Pancreas (tissue), 10 donors: ENCODE measurements at regions of chr16 and their contacts with region 1.

Region 1: DNA sequence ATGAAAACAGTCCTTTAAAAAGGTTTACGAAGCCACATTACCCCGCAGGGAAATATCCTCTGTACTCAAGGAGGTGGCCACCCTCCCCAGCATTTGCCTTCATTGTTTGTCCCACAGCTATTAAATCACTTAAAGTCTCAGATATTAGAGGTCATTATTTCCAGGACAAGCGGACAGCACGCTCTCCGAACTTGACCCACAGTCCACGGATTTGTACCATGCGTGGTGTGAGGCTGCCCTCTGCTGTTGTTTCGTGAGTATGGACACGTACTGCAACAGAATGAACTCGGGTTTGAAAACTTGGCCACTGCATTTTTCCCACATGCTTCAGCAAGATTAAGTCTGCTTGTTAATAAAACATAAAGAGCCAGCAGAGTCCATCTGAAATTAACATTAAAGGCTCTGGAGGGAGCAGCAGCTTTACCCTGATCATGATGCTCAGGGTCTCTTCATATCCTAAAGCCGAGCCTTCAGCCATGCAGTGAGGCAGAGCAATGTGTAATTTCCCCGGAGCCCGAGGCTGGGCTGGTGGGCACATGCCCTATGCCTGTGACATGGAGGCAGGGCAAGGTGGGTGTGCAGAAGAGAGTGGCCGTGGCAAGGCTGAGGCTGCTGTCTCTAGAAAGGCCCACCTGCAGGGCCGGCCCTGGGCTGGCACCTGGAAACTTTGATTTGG is 19.7 kb downstream of the MEAK7 start:
- DNase-seq: peak in 1 of 6 donors; percentile 53
- ATAC-seq: peak in 3 of 4 donors; percentile 72 to 78 (median 72)
- H3K4me3 ChIP-seq: no peak overlapping the region
- H3K27ac ChIP-seq: no peak overlapping the region
- H3K4me1 ChIP-seq: no peaks in the 10 kb centered on the region
- H3K27me3 ChIP-seq: no peaks in the 10 kb centered on the region
- CTCF ChIP-seq: peak in 2 of 4 donors; percentile 14 to 45

Region 2: GRCh38 chr16:84277237-84277823 is 207.4 kb before region 1 on chr16:
- intact Hi-C with region 1: loop called in 2 of 3 experiments (anchors 5 to 10 kb)
- DNase-seq: peak in 5 of 6 donors; percentile 11 to 81 (median 40)
- ATAC-seq: peak in 3 of 4 donors; percentile 60 to 76 (median 66)
- H3K4me3 ChIP-seq: no peak overlapping the region
- H3K27ac ChIP-seq: no peak overlapping the region
- H3K4me1 ChIP-seq: no peaks in the 10 kb centered on the region
- H3K27me3 ChIP-seq: peaks cover 0 to 6% (median 0%) of the 10 kb centered on the region in 4 donors
- CTCF ChIP-seq: peak; percentile 53 to 69 (median 62)

Region 3: GRCh38 chr16:84284154-84284722 is 200.5 kb before region 1 on chr16:
- intact Hi-C with region 1: loop called in 2 of 3 experiments (anchors 5 to 10 kb)
- DNase-seq: peak in 3 of 6 donors; percentile 5 to 28 (median 17)
- ATAC-seq: peak in 3 of 4 donors; percentile 57 to 75 (median 66)
- H3K4me3 ChIP-seq: no peak overlapping the region
- H3K27ac ChIP-seq: no peak overlapping the region
- H3K4me1 ChIP-seq: no peaks in the 10 kb centered on the region
- H3K27me3 ChIP-seq: no peaks in the 10 kb centered on the region
- CTCF ChIP-seq: no peak